B cell (primary cell): ENCODE measurements at regions of chr14 and their contacts with region 1.

Region 1: DNA sequence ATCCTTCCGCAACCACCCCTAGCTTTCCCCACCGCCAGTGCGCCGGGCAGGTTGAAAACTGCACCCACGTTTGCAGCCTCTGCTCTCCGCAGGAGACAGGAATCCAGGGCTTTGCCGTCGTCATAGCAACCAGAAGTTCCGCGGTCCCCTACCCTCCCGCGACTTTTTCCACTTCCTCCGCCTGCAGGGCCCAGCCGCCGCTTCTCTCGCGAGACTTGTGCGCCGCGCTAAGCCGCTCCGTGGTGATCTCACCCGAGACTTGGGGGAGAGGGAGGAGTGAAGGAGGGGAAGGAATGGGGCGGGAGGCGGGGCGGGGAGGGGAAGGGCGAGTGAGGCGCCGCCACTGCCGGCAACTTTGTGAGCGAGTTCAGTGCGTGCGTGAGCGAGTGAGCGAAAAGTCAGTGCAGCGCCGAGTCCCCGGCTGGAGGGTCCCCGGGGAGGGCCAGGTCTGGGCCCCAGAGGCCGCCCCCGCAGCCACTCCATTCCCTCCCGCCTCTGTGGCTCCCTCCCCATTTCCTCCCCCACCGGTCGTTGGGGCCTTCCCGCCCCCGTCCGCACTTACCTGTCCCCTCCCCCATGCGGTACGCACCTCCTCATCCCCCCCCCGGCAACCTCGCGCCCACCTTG is 413.0 kb downstream of the PCNX1 start:
- DNase-seq: peak; percentile 99
- ATAC-seq: peak; percentile 81
- H3K4me3 ChIP-seq: peak within 1 kb of the TSS; percentile 78 to 96 (median 87)
- H3K4me3 Mint-ChIP-seq: peak within 1 kb of the TSS; percentile 95
- H3K27ac ChIP-seq: peak within 1 kb of the TSS; percentile 97
- H3K27ac Mint-ChIP-seq: peak within 1 kb of the TSS; percentile 97
- H3K4me1 ChIP-seq: peaks cover 38 to 40% of the 10 kb centered on the region in 2 donors
- H3K4me1 Mint-ChIP-seq: peaks cover 42% of the 10 kb centered on the region
- H3K27me3 ChIP-seq: no peaks in the 10 kb centered on the region
- H3K27me3 Mint-ChIP-seq: no peaks in the 10 kb centered on the region
- CTCF ChIP-seq: no peak

Region 2: GRCh38 chr14:70665191-70665916 is 654.9 kb before region 1 on chr14:
- CTCF ChIA-PET with region 1: no interaction called
- POLR2A ChIA-PET with region 1: no interaction called
- intact Hi-C with region 1: loop called (anchors 5 kb)
- DNase-seq: peak; percentile 75
- ATAC-seq: peak; percentile 61
- H3K4me3 ChIP-seq: peak overlapping the region in 3 of 5 experiments; percentile 13 to 41 (median 16)
- H3K4me3 Mint-ChIP-seq: peak overlapping the region; percentile 65
- H3K27ac ChIP-seq: peak overlapping the region; percentile 79 to 89
- H3K27ac Mint-ChIP-seq: peak overlapping the region; percentile 89
- H3K4me1 ChIP-seq: peaks cover 94 to 100% of the 10 kb centered on the region in 2 donors
- H3K4me1 Mint-ChIP-seq: peaks cover 97% of the 10 kb centered on the region
- H3K27me3 ChIP-seq: no peaks in the 10 kb centered on the region
- H3K27me3 Mint-ChIP-seq: no peaks in the 10 kb centered on the region
- CTCF ChIP-seq: no peak

Region 3: GRCh38 chr14:71138448-71139293 is 181.5 kb before region 1 on chr14:
- CTCF ChIA-PET with region 1: interaction called, 12 read pairs
- POLR2A ChIA-PET with region 1: no interaction called
- intact Hi-C with region 1: loop called (anchors 2 kb)
- DNase-seq: peak; percentile 77
- ATAC-seq: peak; percentile 72
- H3K4me3 ChIP-seq: no peak overlapping the region
- H3K4me3 Mint-ChIP-seq: no peak overlapping the region
- H3K27ac ChIP-seq: no peak overlapping the region
- H3K27ac Mint-ChIP-seq: no peak overlapping the region
- H3K4me1 ChIP-seq: peaks cover 15 to 23% of the 10 kb centered on the region in 2 donors
- H3K4me1 Mint-ChIP-seq: peaks cover 27% of the 10 kb centered on the region
- H3K27me3 ChIP-seq: no peaks in the 10 kb centered on the region
- H3K27me3 Mint-ChIP-seq: no peaks in the 10 kb centered on the region
- CTCF ChIP-seq: peak; percentile 97

Region 4: DNA sequence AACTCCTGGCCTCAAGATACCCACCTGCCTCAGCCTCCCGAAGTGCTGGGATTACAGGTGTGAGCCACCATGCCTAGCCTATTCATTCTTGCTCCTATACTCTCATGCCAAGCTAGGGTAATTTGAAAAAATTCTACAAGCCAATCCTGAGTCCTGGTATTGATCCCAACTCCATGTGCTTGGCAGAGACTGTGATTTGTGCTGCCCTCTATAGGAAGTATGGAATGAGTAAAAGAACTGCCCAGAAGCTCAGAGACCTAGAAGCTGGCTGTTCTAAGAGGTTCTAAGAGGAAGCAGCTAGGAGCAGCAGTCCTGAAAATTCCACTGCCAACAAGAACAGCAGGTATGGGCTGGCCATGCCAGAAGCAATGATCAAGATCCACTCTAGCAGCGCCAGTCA is 10.5 kb before region 1 on chr14:
- CTCF ChIA-PET with region 1: no interaction called
- POLR2A ChIA-PET with region 1: no interaction called
- intact Hi-C with region 1: no loop called
- DNase-seq: no peak
- ATAC-seq: no peak
- H3K4me3 ChIP-seq: no peak overlapping the region
- H3K4me3 Mint-ChIP-seq: no peak overlapping the region
- H3K27ac ChIP-seq: no peak overlapping the region
- H3K27ac Mint-ChIP-seq: no peak overlapping the region
- H3K4me1 ChIP-seq: peaks cover 0 to 5% of the 10 kb centered on the region in 2 donors
- H3K4me1 Mint-ChIP-seq: no peaks in the 10 kb centered on the region
- H3K27me3 ChIP-seq: peaks cover 0 to 7% (median 6%) of the 10 kb centered on the region in 4 experiments
- H3K27me3 Mint-ChIP-seq: peaks cover 32% of the 10 kb centered on the region
- CTCF ChIP-seq: no peak

Region 5: GRCh38 chr14:71355324-71356201 is 35.3 kb after region 1 on chr14:
- CTCF ChIA-PET with region 1: interaction called, 6 read pairs
- POLR2A ChIA-PET with region 1: interaction called, 3 read pairs
- intact Hi-C with region 1: loop called (anchors 1 kb)
- DNase-seq: peak; percentile 86
- ATAC-seq: peak; percentile 47
- H3K4me3 ChIP-seq: peak overlapping the region in 1 of 5 experiments; percentile 35
- H3K4me3 Mint-ChIP-seq: peak overlapping the region; percentile 55
- H3K27ac ChIP-seq: peak overlapping the region; percentile 89 to 95
- H3K27ac Mint-ChIP-seq: peak overlapping the region; percentile 76
- H3K4me1 ChIP-seq: peaks cover 72 to 75% of the 10 kb centered on the region in 2 donors
- H3K4me1 Mint-ChIP-seq: peaks cover 80% of the 10 kb centered on the region
- H3K27me3 ChIP-seq: no peaks in the 10 kb centered on the region
- H3K27me3 Mint-ChIP-seq: no peaks in the 10 kb centered on the region
- CTCF ChIP-seq: no peak

Region 6: DNA sequence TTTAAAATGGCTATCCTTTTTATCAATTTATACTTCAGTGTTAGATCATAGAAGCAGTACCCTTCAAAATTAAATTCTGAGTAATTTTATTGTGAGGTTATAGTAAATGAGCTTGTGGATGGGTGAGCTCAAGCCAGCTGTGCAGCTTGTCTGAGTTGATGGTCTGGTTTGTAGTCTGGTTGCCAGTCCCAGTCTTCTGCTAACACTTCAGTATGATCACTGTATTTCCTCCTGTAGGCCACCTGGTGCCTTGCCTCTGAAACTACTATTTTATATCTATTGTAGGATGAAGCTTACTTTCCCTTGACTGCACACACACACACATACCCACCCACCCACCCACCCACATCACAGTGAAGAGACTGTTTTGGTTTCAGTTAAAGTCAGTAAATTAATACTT is 83.4 kb after region 1 on chr14:
- CTCF ChIA-PET with region 1: interaction called, 249 read pairs
- POLR2A ChIA-PET with region 1: interaction called, 16 read pairs
- intact Hi-C with region 1: loop called (anchors 1 kb)
- DNase-seq: peak; percentile 84
- ATAC-seq: peak; percentile 43
- H3K4me3 ChIP-seq: no peak overlapping the region
- H3K4me3 Mint-ChIP-seq: peak overlapping the region; percentile 47
- H3K27ac ChIP-seq: peak overlapping the region; percentile 15 to 64
- H3K27ac Mint-ChIP-seq: peak overlapping the region; percentile 83
- H3K4me1 ChIP-seq: peaks cover 43 to 55% of the 10 kb centered on the region in 2 donors
- H3K4me1 Mint-ChIP-seq: peaks cover 53% of the 10 kb centered on the region
- H3K27me3 ChIP-seq: no peaks in the 10 kb centered on the region
- H3K27me3 Mint-ChIP-seq: no peaks in the 10 kb centered on the region
- CTCF ChIP-seq: peak; percentile 70

Region 7: GRCh38 chr14:71555654-71556559 is 235.7 kb after region 1 on chr14:
- CTCF ChIA-PET with region 1: no interaction called
- POLR2A ChIA-PET with region 1: no interaction called
- intact Hi-C with region 1: loop called (anchors 5 kb)
- DNase-seq: peak; percentile 76
- ATAC-seq: peak; percentile 86
- H3K4me3 ChIP-seq: peak overlapping the region in 4 of 5 experiments; percentile 4 to 40 (median 10)
- H3K4me3 Mint-ChIP-seq: peak overlapping the region; percentile 71
- H3K27ac ChIP-seq: peak overlapping the region; percentile 76 to 92
- H3K27ac Mint-ChIP-seq: peak overlapping the region; percentile 91
- H3K4me1 ChIP-seq: peaks cover 37 to 49% of the 10 kb centered on the region in 2 donors
- H3K4me1 Mint-ChIP-seq: peaks cover 76% of the 10 kb centered on the region
- H3K27me3 ChIP-seq: no peaks in the 10 kb centered on the region
- H3K27me3 Mint-ChIP-seq: no peaks in the 10 kb centered on the region
- CTCF ChIP-seq: no peak